Heart right ventricle (tissue), 16 donors: ENCODE measurements at regions of chr17 and their contacts with region 1.

Region 1: DNA sequence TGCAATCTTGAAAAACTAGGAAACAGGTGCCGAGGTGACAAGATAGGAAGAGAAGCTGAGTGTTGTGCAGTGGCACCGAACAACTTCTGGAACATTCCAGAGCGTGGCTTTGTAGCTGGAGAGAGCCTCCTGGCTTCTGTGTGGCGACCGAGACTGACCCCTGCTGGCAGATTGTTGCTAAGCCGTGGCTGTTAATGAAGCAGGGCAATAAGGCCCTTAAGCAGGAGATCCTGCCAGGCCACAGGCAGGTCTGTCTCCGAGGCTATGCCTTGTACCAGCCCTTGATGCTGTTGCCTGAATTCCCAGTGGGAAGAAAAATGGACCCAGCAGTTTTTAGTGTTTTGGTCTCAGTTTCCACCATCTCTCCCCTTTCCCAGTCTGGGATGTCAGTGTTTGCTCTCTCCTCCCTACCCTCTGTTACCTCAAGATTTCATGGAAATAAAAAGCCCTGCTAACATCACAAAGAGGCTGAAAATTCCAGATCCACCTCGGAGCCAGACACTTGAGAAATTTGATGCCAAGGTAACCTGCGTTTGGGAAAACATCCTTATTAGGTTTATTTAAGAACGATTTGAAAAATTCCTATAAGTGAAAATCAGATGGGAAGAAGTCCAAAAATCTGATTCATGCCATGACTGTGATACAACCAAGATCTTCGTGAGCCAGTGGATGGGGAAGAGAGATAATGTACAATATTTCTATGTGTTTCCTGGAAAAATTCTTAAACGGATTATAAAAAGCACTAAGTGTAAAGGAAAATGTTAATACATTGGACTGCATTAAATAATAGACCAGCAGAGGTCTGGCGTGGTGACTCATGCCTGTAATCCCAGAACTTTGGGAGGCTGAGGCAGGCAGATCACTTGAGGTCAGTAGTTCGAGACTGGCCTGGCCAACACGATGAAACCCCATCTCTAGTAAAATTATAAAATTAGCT is 265.1 kb downstream of the PRKCA start:
- DNase-seq: peak; percentile 72 to 77
- ATAC-seq: peak in 7 of 8 donors; percentile 64 to 88 (median 82)
- H3K4me3 ChIP-seq: no peak overlapping the region
- H3K27ac ChIP-seq: no peak overlapping the region
- H3K4me1 ChIP-seq: peaks cover 0 to 4% (median 0%) of the 10 kb centered on the region in 9 donors
- H3K27me3 ChIP-seq: no peaks in the 10 kb centered on the region
- CTCF ChIP-seq: peak; percentile 48 to 89 (median 78)

Region 2: GRCh38 chr17:66200685-66201092 is 366.8 kb before region 1 on chr17:
- intact Hi-C with region 1: loop called in 3 of 10 experiments (anchors 5 to 10 kb)
- DNase-seq: peak in 1 of 2 donors; percentile 29
- ATAC-seq: peak in 3 of 8 donors; percentile 27 to 52 (median 45)
- H3K4me3 ChIP-seq: no peak overlapping the region
- H3K27ac ChIP-seq: no peak overlapping the region
- H3K4me1 ChIP-seq: no peaks in the 10 kb centered on the region
- H3K27me3 ChIP-seq: no peaks in the 10 kb centered on the region
- CTCF ChIP-seq: peak; percentile 33 to 71 (median 54)

Region 3: GRCh38 chr17:66248285-66248684 is 319.2 kb before region 1 on chr17:
- intact Hi-C with region 1: loop called in 2 of 10 experiments (anchors 2 to 10 kb)
- DNase-seq: peak in 1 of 2 donors; percentile 8
- ATAC-seq: peak in 7 of 8 donors; percentile 33 to 96 (median 85)
- H3K4me3 ChIP-seq: no peak overlapping the region
- H3K27ac ChIP-seq: no peak overlapping the region
- H3K4me1 ChIP-seq: peaks cover 0 to 7% (median 0%) of the 10 kb centered on the region in 9 donors
- H3K27me3 ChIP-seq: no peaks in the 10 kb centered on the region
- CTCF ChIP-seq: no peak

Region 4: DNA sequence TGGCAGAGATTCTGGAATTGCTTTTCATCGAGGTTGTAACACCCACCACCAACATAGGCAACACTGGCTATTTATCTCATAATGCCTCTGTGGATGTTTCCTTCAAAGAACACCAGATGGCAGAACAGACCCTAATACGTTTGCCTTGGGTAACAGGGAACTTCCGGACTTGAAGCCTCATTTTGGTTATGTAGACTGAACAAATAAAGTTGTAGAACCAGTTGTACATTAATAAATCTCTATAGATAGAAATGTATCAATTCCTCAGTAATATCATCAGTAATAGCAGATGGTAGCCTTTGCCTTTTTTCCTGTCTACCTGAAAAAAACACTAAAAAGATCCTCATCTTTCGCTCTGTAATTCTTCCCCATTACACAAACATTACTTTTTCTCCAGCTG is 312.4 kb before region 1 on chr17:
- intact Hi-C with region 1: loop called (anchors 2 to 10 kb)
- DNase-seq: peak in 1 of 2 donors; percentile 36
- ATAC-seq: peak in 7 of 8 donors; percentile 58 to 82 (median 68)
- H3K4me3 ChIP-seq: no peak overlapping the region
- H3K27ac ChIP-seq: no peak overlapping the region
- H3K4me1 ChIP-seq: peaks cover 0 to 3% (median 0%) of the 10 kb centered on the region in 9 donors
- H3K27me3 ChIP-seq: no peaks in the 10 kb centered on the region
- CTCF ChIP-seq: peak; percentile 32 to 83 (median 70)

Region 5: GRCh38 chr17:66260275-66260674 is 307.2 kb before region 1 on chr17:
- intact Hi-C with region 1: loop called in 9 of 10 experiments (anchors 2 to 10 kb)
- DNase-seq: no peak
- ATAC-seq: no peak
- H3K4me3 ChIP-seq: no peak overlapping the region
- H3K27ac ChIP-seq: no peak overlapping the region
- H3K4me1 ChIP-seq: peaks cover 0 to 1% (median 0%) of the 10 kb centered on the region in 9 donors
- H3K27me3 ChIP-seq: no peaks in the 10 kb centered on the region
- CTCF ChIP-seq: no peak

Region 6: GRCh38 chr17:66281671-66282369 is 285.7 kb before region 1 on chr17:
- intact Hi-C with region 1: loop called in 2 of 10 experiments (anchors 10 kb)
- DNase-seq: no peak
- ATAC-seq: no peak
- H3K4me3 ChIP-seq: no peak overlapping the region
- H3K27ac ChIP-seq: no peak overlapping the region
- H3K4me1 ChIP-seq: no peaks in the 10 kb centered on the region
- H3K27me3 ChIP-seq: no peaks in the 10 kb centered on the region
- CTCF ChIP-seq: no peak

Region 7: GRCh38 chr17:66301797-66302741 is 265.4 kb before region 1 on chr17 and contains the start of gene PRKCA:
- intact Hi-C with region 1: loop called in 1 of 10 experiments (anchors 10 kb)
- DNase-seq: peak; percentile 59 to 81
- ATAC-seq: peak; percentile 67 to 93 (median 88)
- H3K4me3 ChIP-seq: peak within 1 kb of the TSS; percentile 72 to 97 (median 81)
- H3K27ac ChIP-seq: peak within 1 kb of the TSS; percentile 51 to 87 (median 75)
- H3K4me1 ChIP-seq: peaks cover 0 to 40% (median 17%) of the 10 kb centered on the region in 9 donors
- H3K27me3 ChIP-seq: peaks cover 0 to 22% (median 0%) of the 10 kb centered on the region in 7 donors
- CTCF ChIP-seq: no peak
- total RNA-seq, gene PRKCA: 4.5 to 27.6 (median 13.7) TPM